ENCODE measurements at regions of chr3 and their contacts with region 1.

Region 1: DNA sequence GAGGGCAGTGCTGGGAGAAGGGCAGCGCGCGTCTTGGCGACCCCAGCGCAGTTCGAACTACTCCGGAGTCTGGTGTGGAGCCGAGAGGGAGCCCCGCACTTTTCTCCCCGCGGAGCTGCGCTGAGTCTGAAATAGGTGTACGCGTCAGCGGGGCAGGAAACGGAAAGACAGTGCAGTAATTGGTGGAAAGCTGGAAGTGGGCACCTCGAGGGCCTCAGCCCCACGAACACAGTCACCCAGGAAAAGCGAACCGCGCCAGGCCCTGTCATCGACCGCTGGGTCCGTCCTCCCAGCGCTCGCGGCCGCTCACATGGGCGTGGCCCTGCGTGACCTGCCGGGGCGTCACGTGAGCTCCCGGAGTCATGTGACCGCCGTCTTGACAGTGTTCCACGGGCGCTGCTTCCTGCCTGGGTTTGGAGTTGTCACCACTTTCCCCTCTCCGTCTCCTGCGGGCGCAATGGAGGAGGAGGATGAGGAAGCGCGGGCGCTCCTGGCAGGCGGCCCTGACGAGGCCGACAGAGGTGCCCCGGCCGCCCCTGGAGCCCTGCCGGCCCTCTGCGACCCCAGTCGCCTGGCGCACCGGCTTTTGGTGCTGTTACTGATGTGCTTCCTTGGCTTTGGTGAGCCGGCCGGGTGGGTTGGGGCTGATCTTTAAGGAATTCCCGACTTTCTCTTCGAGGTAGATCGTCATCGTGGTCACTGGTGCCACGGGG is at the start of gene MFSD1:
- DNase-seq: peak; percentile 60 to 94 (median 88)
- ATAC-seq: peak; percentile 90
- H3K4me3 ChIP-seq: peak within 1 kb of the TSS; percentile 88 to 100
- H3K4me3 Mint-ChIP-seq: peak within 1 kb of the TSS; percentile 90
- H3K27ac ChIP-seq: peak within 1 kb of the TSS; percentile 71 to 79
- H3K27ac Mint-ChIP-seq: peak within 1 kb of the TSS; percentile 91
- H3K4me1 ChIP-seq: peaks cover 27% of the 10 kb centered on the region
- H3K4me1 Mint-ChIP-seq: peaks cover 35% of the 10 kb centered on the region
- H3K27me3 ChIP-seq: no peaks in the 10 kb centered on the region
- H3K27me3 Mint-ChIP-seq: no peaks in the 10 kb centered on the region
- CTCF ChIP-seq: no peak
- total RNA-seq, gene MFSD1: 5.3 to 6.3 TPM

Region 2: DNA sequence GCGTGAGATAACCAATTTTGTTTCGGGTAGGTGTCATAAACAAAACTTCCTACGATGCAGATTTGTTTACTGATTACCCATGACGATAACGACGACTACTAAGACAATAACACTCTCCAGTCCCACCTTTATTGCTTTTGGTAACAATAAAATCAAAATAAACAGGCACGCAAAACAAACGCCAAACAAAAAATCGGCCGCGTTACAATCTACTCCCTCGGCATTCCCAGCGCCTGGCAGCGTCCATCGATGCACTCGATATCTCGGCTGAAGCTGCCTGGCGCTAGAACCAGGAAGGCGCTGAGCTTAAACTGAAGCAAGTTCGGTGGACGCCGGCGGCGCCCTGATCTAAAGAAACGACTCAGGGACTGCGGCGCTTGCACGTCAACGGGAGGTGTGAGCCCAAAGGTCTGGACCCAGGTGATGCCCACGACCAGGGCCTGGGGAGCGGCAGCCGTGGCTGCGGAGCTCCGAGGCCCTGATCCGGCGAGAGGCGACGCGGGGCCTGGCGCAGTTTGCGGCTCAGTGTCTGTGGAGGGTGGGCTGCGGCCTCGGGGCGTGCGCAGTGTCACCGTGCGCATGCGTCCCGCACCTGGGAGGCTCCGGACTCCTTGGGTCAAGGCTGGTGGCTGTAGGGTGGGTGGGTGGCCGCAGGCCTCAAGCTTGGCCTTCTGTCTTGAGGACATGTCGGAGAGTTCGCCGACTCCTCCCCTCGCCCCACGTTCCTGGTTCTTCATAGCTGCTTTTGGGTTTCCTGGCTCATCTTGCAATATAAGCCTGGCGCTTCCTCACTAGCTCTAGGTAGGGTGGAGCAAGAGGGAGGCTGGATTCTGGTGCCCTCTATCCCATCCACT is 691.8 kb before region 1 on chr3 and contains the start of gene RSRC1:
- CTCF ChIA-PET with region 1: no interaction called
- POLR2A ChIA-PET with region 1: no interaction called
- intact Hi-C with region 1: loop called in 1 of 2 experiments (anchors 10 kb)
- DNase-seq: peak; percentile 48 to 89 (median 78)
- ATAC-seq: peak; percentile 89
- H3K4me3 ChIP-seq: peak within 1 kb of the TSS; percentile 76 to 82
- H3K4me3 Mint-ChIP-seq: peak within 1 kb of the TSS; percentile 93
- H3K27ac ChIP-seq: peak within 1 kb of the TSS; percentile 61 to 69
- H3K27ac Mint-ChIP-seq: peak within 1 kb of the TSS; percentile 85
- H3K4me1 ChIP-seq: peaks cover 44% of the 10 kb centered on the region
- H3K4me1 Mint-ChIP-seq: peaks cover 65% of the 10 kb centered on the region
- H3K27me3 ChIP-seq: peaks cover 35 to 41% of the 10 kb centered on the region in 2 experiments
- H3K27me3 Mint-ChIP-seq: peaks cover 36% of the 10 kb centered on the region
- CTCF ChIP-seq: no peak
- total RNA-seq, gene RSRC1: 21.8 to 25.0 TPM

Region 3: GRCh38 chr3:158659454-158660237 is 142.2 kb before region 1 on chr3:
- CTCF ChIA-PET with region 1: interaction called, 11 read pairs
- POLR2A ChIA-PET with region 1: no interaction called
- intact Hi-C with region 1: no loop called
- DNase-seq: peak in 6 of 9 experiments; percentile 16 to 60 (median 50)
- ATAC-seq: peak; percentile 83
- H3K4me3 ChIP-seq: no peak overlapping the region
- H3K4me3 Mint-ChIP-seq: no peak overlapping the region
- H3K27ac ChIP-seq: no peak overlapping the region
- H3K27ac Mint-ChIP-seq: no peak overlapping the region
- H3K4me1 ChIP-seq: no peaks in the 10 kb centered on the region
- H3K4me1 Mint-ChIP-seq: peaks cover 5% of the 10 kb centered on the region
- H3K27me3 ChIP-seq: no peaks in the 10 kb centered on the region
- H3K27me3 Mint-ChIP-seq: no peaks in the 10 kb centered on the region
- CTCF ChIP-seq: peak; percentile 52

Region 4: DNA sequence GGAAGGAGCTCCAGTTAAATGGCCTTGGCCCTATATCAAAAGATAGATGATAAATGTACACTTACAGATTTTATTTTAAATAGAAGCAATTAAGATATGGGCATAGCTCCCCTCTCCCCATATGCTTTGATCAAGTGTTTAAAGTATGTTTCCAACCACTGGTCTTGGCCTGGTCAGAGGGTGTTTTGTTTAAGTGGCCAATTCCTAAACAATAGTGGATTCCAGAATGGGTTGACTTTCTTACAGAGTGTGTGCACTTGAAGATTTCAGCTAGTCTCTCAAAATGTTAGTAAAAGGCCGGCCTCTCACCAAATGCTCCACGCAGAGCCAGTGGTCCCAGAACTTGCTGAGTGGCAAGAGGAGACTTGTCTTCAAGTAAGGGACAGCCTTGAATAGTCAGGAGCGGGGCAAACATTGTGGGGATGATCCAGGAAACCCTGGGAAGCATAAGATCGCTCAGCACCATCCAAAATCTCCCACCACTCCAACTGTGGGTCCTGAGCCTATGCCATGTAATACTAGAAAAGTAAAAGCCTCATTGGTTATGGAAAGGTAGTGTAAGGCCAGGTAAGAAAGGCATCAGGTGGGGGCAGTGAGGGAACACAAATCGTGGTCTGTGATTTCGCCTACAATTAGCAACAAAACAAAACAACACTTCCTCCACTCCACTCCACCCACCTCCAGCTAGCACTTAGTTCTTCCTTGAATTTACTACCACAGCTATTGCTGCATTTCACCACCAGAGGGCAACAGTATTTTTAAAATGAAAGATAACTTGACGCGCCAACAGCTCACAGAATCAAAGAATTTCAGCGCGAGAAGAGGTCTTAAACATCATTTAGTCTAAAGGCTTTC is 74.4 kb before region 1 on chr3:
- CTCF ChIA-PET with region 1: interaction called, 24 read pairs
- POLR2A ChIA-PET with region 1: interaction called, 3 read pairs
- intact Hi-C with region 1: no loop called
- DNase-seq: peak in 8 of 9 experiments; percentile 15 to 73 (median 44)
- ATAC-seq: peak; percentile 78
- H3K4me3 ChIP-seq: peak overlapping the region in 1 of 2 experiments; percentile 11
- H3K4me3 Mint-ChIP-seq: peak overlapping the region; percentile 52
- H3K27ac ChIP-seq: no peak overlapping the region
- H3K27ac Mint-ChIP-seq: peak overlapping the region; percentile 14
- H3K4me1 ChIP-seq: peaks cover 22% of the 10 kb centered on the region
- H3K4me1 Mint-ChIP-seq: peaks cover 32% of the 10 kb centered on the region
- H3K27me3 ChIP-seq: peaks cover 0 to 4% of the 10 kb centered on the region in 2 experiments
- H3K27me3 Mint-ChIP-seq: peaks cover 7% of the 10 kb centered on the region
- CTCF ChIP-seq: peak; percentile 67

Region 5: DNA sequence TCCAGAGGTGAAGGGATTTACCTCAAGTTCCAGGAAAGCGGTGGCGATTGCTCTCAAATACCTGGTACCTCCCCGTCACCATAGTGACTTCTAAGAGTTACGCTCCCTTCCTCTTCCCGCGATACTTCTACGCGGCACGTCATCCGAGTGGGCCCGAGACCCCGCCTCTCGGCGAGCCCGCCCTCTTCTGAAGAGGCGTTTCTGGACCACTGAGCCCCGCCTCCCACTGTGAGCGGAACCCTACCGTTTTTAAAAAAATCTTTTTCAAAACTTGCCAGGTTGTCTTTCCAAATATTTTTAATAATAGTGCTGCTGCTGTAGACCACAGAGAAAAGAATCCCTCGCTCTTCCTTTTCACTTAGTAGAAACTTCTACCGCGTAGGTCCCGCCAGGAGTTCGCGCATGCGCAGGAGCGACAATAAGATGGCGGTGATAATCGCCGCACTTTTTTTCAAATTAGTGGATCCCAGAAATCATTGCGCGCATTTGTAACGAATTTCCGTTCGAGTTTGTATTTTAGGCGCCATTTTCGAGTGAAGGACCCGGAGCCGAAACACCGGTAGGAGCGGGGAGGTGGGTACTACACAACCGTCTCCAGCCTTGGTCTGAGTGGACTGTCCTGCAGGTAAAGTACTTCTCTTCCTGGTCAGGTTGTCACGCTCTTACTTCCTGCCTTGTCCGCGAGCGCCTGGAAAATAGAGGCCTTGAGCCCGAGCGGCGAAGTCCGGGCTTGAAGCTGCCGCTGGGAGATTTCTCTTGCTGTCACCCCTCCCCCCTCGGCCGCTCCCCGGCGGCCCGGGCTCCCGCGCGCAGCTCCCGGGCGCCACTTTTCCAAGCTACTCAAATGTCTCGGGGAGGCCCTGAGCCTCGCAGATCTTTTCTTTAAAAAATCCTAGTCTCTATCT is 1597.5 kb after region 1 on chr3 and contains the starts of genes IFT80 and SMC4:
- CTCF ChIA-PET with region 1: no interaction called
- POLR2A ChIA-PET with region 1: no interaction called
- intact Hi-C with region 1: loop called (anchors 5 kb)
- DNase-seq: peak; percentile 87 to 98 (median 96)
- ATAC-seq: peak; percentile 95
- H3K4me3 ChIP-seq: peak within 1 kb of the TSS; percentile 84 to 85
- H3K4me3 Mint-ChIP-seq: peak within 1 kb of the TSS; percentile 90
- H3K27ac ChIP-seq: peak within 1 kb of the TSS; percentile 85 to 92
- H3K27ac Mint-ChIP-seq: peak within 1 kb of the TSS; percentile 99
- H3K4me1 ChIP-seq: peaks cover 35% of the 10 kb centered on the region
- H3K4me1 Mint-ChIP-seq: peaks cover 56% of the 10 kb centered on the region
- H3K27me3 ChIP-seq: peaks cover 0 to 8% of the 10 kb centered on the region in 2 experiments
- H3K27me3 Mint-ChIP-seq: peaks cover 26% of the 10 kb centered on the region
- CTCF ChIP-seq: no peak
- total RNA-seq, gene IFT80: 9.9 to 12.7 TPM
- total RNA-seq, gene SMC4: 40.8 to 43.5 TPM

Region 6: GRCh38 chr3:160565442-160566403 is 1763.9 kb after region 1 on chr3 and contains the start of gene KPNA4:
- CTCF ChIA-PET with region 1: no interaction called
- POLR2A ChIA-PET with region 1: no interaction called
- intact Hi-C with region 1: loop called in 1 of 2 experiments (anchors 5 kb)
- DNase-seq: peak; percentile 94 to 98 (median 96)
- ATAC-seq: peak; percentile 88
- H3K4me3 ChIP-seq: peak within 1 kb of the TSS; percentile 97 to 98
- H3K4me3 Mint-ChIP-seq: peak within 1 kb of the TSS; percentile 99
- H3K27ac ChIP-seq: peak within 1 kb of the TSS; percentile 81 to 93
- H3K27ac Mint-ChIP-seq: peak within 1 kb of the TSS; percentile 97
- H3K4me1 ChIP-seq: peaks cover 40% of the 10 kb centered on the region
- H3K4me1 Mint-ChIP-seq: peaks cover 52% of the 10 kb centered on the region
- H3K27me3 ChIP-seq: no peaks in the 10 kb centered on the region
- H3K27me3 Mint-ChIP-seq: no peaks in the 10 kb centered on the region
- CTCF ChIP-seq: no peak
- total RNA-seq, gene KPNA4: 64.4 to 69.2 TPM